CD8-positive, alpha-beta T cell (primary cell): ENCODE measurements at regions of chr12 and their contacts with region 1.

Region 1: GRCh38 chr12:106302401-106303201 is at the start of gene TCP11L2:
- DNase-seq: peak; percentile 88 to 96 (median 93)
- ATAC-seq: peak; percentile 63
- H3K4me3 ChIP-seq: peak within 1 kb of the TSS; percentile 98 to 100
- H3K4me3 Mint-ChIP-seq: peak within 1 kb of the TSS; percentile 96
- H3K27ac ChIP-seq: peak within 1 kb of the TSS; percentile 99 to 100
- H3K27ac Mint-ChIP-seq: peak within 1 kb of the TSS; percentile 100
- H3K4me1 ChIP-seq: peaks cover 51% of the 10 kb centered on the region
- H3K4me1 Mint-ChIP-seq: peaks cover 61% of the 10 kb centered on the region
- H3K27me3 ChIP-seq: no peaks in the 10 kb centered on the region
- H3K27me3 Mint-ChIP-seq: no peaks in the 10 kb centered on the region
- CTCF ChIP-seq: no peak
- total RNA-seq, gene TCP11L2: 130 to 133 TPM

Region 2: GRCh38 chr12:106247674-106248311 is 54.8 kb before region 1 on chr12 and contains the start of gene CKAP4:
- CTCF ChIA-PET with region 1: interaction called, 4 read pairs
- POLR2A ChIA-PET with region 1: interaction called, 23 read pairs
- intact Hi-C with region 1: loop called (anchors 1 kb)
- DNase-seq: peak; percentile 10 to 83 (median 58)
- ATAC-seq: peak; percentile 55
- H3K4me3 ChIP-seq: peak within 1 kb of the TSS; percentile 66 to 84
- H3K4me3 Mint-ChIP-seq: peak within 1 kb of the TSS; percentile 86
- H3K27ac ChIP-seq: peak within 1 kb of the TSS; percentile 72 to 73
- H3K27ac Mint-ChIP-seq: peak within 1 kb of the TSS; percentile 95
- H3K4me1 ChIP-seq: peaks cover 32% of the 10 kb centered on the region
- H3K4me1 Mint-ChIP-seq: peaks cover 35% of the 10 kb centered on the region
- H3K27me3 ChIP-seq: no peaks in the 10 kb centered on the region
- H3K27me3 Mint-ChIP-seq: no peaks in the 10 kb centered on the region
- CTCF ChIP-seq: no peak
- total RNA-seq, gene CKAP4: 19.3 to 19.7 TPM

Region 3: GRCh38 chr12:106357549-106358395 is 55.2 kb after region 1 on chr12 and contains the start of gene POLR3B:
- CTCF ChIA-PET with region 1: interaction called, 4 read pairs
- POLR2A ChIA-PET with region 1: interaction called, 34 read pairs
- intact Hi-C with region 1: loop called (anchors 1 kb)
- DNase-seq: peak; percentile 93 to 98 (median 96)
- ATAC-seq: peak; percentile 92
- H3K4me3 ChIP-seq: peak within 1 kb of the TSS; percentile 97
- H3K4me3 Mint-ChIP-seq: peak within 1 kb of the TSS; percentile 91
- H3K27ac ChIP-seq: peak within 1 kb of the TSS; percentile 84 to 90
- H3K27ac Mint-ChIP-seq: peak within 1 kb of the TSS; percentile 90
- H3K4me1 ChIP-seq: peaks cover 13% of the 10 kb centered on the region
- H3K4me1 Mint-ChIP-seq: peaks cover 18% of the 10 kb centered on the region
- H3K27me3 ChIP-seq: no peaks in the 10 kb centered on the region
- H3K27me3 Mint-ChIP-seq: no peaks in the 10 kb centered on the region
- CTCF ChIP-seq: peak; percentile 79
- total RNA-seq, gene POLR3B: 2.5 to 2.6 TPM

Region 4: GRCh38 chr12:106955377-106956047 is 652.9 kb after region 1 on chr12 and contains the start of gene TMEM263:
- CTCF ChIA-PET with region 1: no interaction called
- POLR2A ChIA-PET with region 1: interaction called, 4 read pairs
- intact Hi-C with region 1: loop called (anchors 1 to 5 kb)
- DNase-seq: peak; percentile 83 to 98 (median 93)
- ATAC-seq: peak; percentile 81
- H3K4me3 ChIP-seq: peak within 1 kb of the TSS; percentile 87 to 93
- H3K4me3 Mint-ChIP-seq: peak within 1 kb of the TSS; percentile 97
- H3K27ac ChIP-seq: peak within 1 kb of the TSS; percentile 76 to 90
- H3K27ac Mint-ChIP-seq: peak within 1 kb of the TSS; percentile 96
- H3K4me1 ChIP-seq: peaks cover 18% of the 10 kb centered on the region
- H3K4me1 Mint-ChIP-seq: peaks cover 41% of the 10 kb centered on the region
- H3K27me3 ChIP-seq: no peaks in the 10 kb centered on the region
- H3K27me3 Mint-ChIP-seq: no peaks in the 10 kb centered on the region
- CTCF ChIP-seq: no peak
- total RNA-seq, gene TMEM263: 34.3 to 35.3 TPM